Activated T-helper 2 cell treated with anti-CD3 and anti-CD28 coated beads, Interferon-gamma antibody, Interleukin-2, Interleukin-4, amounts not matched to agents 10 μg/mL and 5 μg/mL and 100 μg/mL, durations not matched to agents 14 hours and 24 hours and 36 hours (primary cell): ENCODE measurements at regions of chr22 and their contacts with region 1.

Region 1: GRCh38 chr22:41940832-41941765 is 5.9 kb downstream of the CENPM start:
- DNase-seq: peak; percentile 81
- H3K4me3 Mint-ChIP-seq: peak overlapping the region; percentile 87
- H3K27ac Mint-ChIP-seq: peak overlapping the region; percentile 100
- H3K4me1 Mint-ChIP-seq: peaks cover 46% of the 10 kb centered on the region
- H3K27me3 Mint-ChIP-seq: no peaks in the 10 kb centered on the region

Region 2: DNA sequence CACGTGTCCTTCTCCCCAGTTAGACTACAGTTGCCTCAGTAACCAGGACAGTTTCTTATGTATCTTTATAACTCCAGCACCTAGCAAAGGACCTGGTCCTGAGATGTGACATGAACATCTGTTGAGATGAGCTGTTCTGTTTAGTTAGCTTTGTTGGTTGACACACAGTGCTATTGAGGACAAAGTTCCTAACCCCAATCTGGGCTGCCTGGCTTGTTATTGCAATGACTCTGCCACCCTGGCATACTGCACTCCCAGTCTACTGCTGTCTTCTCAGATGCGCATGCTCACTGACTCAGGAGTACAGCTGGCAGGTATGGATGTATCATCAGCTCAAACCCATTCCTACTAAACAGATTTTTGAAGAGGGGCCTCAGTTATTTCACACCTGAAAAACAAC is 327.6 kb before region 1 on chr22:
- intact Hi-C with region 1: no loop called
- DNase-seq: no peak
- H3K4me3 Mint-ChIP-seq: no peak overlapping the region
- H3K27ac Mint-ChIP-seq: no peak overlapping the region
- H3K4me1 Mint-ChIP-seq: peaks cover 18% of the 10 kb centered on the region
- H3K27me3 Mint-ChIP-seq: no peaks in the 10 kb centered on the region

Region 3: DNA sequence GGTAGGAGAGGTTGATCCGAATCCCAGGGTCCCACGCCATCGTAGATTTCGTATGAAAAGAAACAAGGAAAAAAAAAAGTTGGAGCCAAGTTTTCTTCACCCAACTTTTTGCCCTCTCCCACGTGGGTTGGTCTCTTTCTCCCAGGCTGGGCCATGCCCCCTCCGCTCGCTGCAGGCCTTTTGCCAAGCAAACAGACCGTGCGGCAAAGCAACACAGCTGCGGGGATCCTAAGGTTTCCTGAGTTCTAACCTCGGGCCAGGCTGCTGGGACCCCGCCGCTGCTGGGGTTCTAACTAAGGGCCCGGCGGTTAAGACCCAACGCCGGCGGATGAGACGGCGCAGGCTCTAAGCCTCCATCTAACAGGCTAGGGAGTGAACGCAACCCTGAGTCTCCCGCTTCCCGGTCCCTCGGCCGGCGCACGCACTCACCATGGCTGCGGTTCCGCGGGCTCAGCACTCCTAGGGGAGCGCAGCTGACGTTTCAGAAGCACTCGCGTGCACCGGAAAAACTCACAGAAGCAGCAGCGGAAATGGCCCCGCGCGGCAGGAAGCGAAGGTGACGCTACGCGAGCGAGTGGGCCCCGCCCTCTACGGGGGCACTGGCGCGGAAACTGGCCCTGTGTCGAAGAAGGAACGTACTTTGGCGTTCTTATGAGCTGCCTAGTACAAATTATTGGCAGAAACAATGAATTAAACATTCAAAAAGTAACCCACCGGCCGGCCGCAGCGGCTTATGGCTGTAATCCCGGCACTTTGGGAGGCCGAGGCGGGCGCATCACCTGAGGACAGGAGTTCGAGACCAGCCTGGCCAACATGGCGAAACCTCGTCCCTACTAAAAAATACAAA is 252.5 kb before region 1 on chr22 and contains the start of gene SNU13:
- intact Hi-C with region 1: loop called (anchors 2 kb)
- DNase-seq: peak; percentile 93
- H3K4me3 Mint-ChIP-seq: peak within 1 kb of the TSS; percentile 99
- H3K27ac Mint-ChIP-seq: peak within 1 kb of the TSS; percentile 99
- H3K4me1 Mint-ChIP-seq: peaks cover 14% of the 10 kb centered on the region
- H3K27me3 Mint-ChIP-seq: no peaks in the 10 kb centered on the region
- total RNA-seq, gene SNU13: 270 and 284 TPM in 2 replicates

Region 4: GRCh38 chr22:41746567-41747400 is 194.3 kb before region 1 on chr22:
- intact Hi-C with region 1: loop called (anchors 2 kb)
- DNase-seq: peak; percentile 36
- H3K4me3 Mint-ChIP-seq: no peak overlapping the region
- H3K27ac Mint-ChIP-seq: no peak overlapping the region
- H3K4me1 Mint-ChIP-seq: peaks cover 6% of the 10 kb centered on the region
- H3K27me3 Mint-ChIP-seq: peaks cover 31% of the 10 kb centered on the region

Region 5: GRCh38 chr22:41822317-41823060 is 118.6 kb before region 1 on chr22:
- intact Hi-C with region 1: loop called (anchors 1 kb)
- DNase-seq: no peak
- H3K4me3 Mint-ChIP-seq: no peak overlapping the region
- H3K27ac Mint-ChIP-seq: peak overlapping the region; percentile 79
- H3K4me1 Mint-ChIP-seq: peaks cover 23% of the 10 kb centered on the region
- H3K27me3 Mint-ChIP-seq: no peaks in the 10 kb centered on the region

Region 6: GRCh38 chr22:41857155-41857859 is 83.8 kb before region 1 on chr22:
- intact Hi-C with region 1: loop called (anchors 1 kb)
- DNase-seq: peak; percentile 67
- H3K4me3 Mint-ChIP-seq: peak overlapping the region; percentile 31
- H3K27ac Mint-ChIP-seq: peak overlapping the region; percentile 92
- H3K4me1 Mint-ChIP-seq: peaks cover 62% of the 10 kb centered on the region
- H3K27me3 Mint-ChIP-seq: no peaks in the 10 kb centered on the region

Region 7: GRCh38 chr22:42052765-42053164 is 111.7 kb after region 1 on chr22:
- intact Hi-C with region 1: no loop called
- DNase-seq: no peak
- H3K4me3 Mint-ChIP-seq: no peak overlapping the region
- H3K27ac Mint-ChIP-seq: no peak overlapping the region
- H3K4me1 Mint-ChIP-seq: no peaks in the 10 kb centered on the region
- H3K27me3 Mint-ChIP-seq: no peaks in the 10 kb centered on the region